ENCODE measurements at regions of chr2 and their contacts with region 1.

Region 1: DNA sequence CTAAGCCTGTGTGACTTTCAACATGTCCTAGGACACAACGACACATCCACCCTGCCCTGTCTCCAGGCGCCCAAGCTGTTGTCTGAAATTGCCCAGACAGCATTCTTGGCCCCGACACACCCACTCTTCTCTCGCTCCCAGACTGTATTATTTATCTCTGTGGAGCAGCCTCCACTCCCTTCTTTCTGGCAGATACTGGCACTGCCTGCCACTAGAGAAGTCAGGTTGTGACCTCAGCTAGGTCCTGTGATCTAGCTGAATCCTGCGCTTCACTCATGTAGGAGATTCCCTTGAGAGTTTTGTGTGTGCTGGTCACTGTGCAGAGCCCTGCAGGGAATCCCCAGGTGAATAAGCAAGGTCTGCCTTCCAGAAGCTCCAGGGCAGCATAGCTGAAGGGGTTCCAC is 77.1 kb upstream of the TNP1 start:
- DNase-seq: peak; percentile 38 to 51
- ATAC-seq: peak; percentile 80 to 94 (median 88)
- H3K4me3 ChIP-seq: no peak overlapping the region
- H3K27ac ChIP-seq: peak overlapping the region in 4 of 10 donors; percentile 17 to 51 (median 38)
- H3K4me1 ChIP-seq: peaks cover 0 to 26% (median 10%) of the 10 kb centered on the region in 9 donors
- H3K27me3 ChIP-seq: no peaks in the 10 kb centered on the region
- CTCF ChIP-seq: no peak

Region 2: DNA sequence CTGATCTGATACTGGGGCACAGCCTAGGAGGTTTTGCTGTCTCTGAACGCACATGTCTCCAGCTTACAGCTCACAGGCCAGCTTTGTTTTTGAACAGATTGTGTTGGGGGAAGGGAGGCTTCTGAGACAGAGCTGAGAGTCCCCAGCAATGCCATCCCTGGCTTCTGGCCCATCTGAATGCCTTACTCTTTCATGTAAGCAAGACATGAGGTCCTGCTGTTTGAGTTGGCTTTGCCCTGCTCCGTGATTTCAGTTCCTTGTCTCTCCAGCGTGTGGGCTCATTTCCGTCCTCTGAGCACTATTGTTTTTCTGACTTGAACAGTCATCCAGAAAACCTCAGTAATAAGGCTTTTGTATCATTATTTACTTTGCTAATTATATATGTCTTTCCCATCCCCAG is 117.8 kb after region 1 on chr2:
- intact Hi-C with region 1: loop called in 1 of 10 experiments (anchors 10 kb)
- DNase-seq: peak in 1 of 2 donors; percentile 29
- ATAC-seq: peak in 3 of 8 donors; percentile 12 to 36 (median 33)
- H3K4me3 ChIP-seq: no peak overlapping the region
- H3K27ac ChIP-seq: peak overlapping the region in 3 of 10 donors; percentile 32 to 47 (median 37)
- H3K4me1 ChIP-seq: peaks cover 2 to 43% (median 19%) of the 10 kb centered on the region in 9 donors
- H3K27me3 ChIP-seq: no peaks in the 10 kb centered on the region
- CTCF ChIP-seq: no peak

Measured in heart right ventricle (tissue), 16 donors.